Dendritic cell treated with granulocyte-macrophage colony-stimulating factor and Interleukin-4, amounts not matched to agents 40 ng/mL and 50 ng/mL, for 4 days (primary cell): ENCODE measurements at regions of chr2 and their contacts with region 1.

Region 1: GRCh38 chr2:240586198-240586918 is at the start of gene CAPN10:
- H3K4me3 Mint-ChIP-seq: peak within 1 kb of the TSS; percentile 92
- H3K27ac Mint-ChIP-seq: peak within 1 kb of the TSS; percentile 97
- H3K4me1 Mint-ChIP-seq: peaks cover 63% of the 10 kb centered on the region
- H3K27me3 Mint-ChIP-seq: no peaks in the 10 kb centered on the region

Region 2: GRCh38 chr2:240513549-240514287 is 72.6 kb before region 1 on chr2:
- intact Hi-C with region 1: loop called (anchors 5 kb)
- H3K4me3 Mint-ChIP-seq: no peak overlapping the region
- H3K27ac Mint-ChIP-seq: peak overlapping the region; percentile 83
- H3K4me1 Mint-ChIP-seq: peaks cover 20% of the 10 kb centered on the region
- H3K27me3 Mint-ChIP-seq: no peaks in the 10 kb centered on the region

Region 3: GRCh38 chr2:240560480-240561326 is 25.7 kb before region 1 on chr2:
- intact Hi-C with region 1: loop called (anchors 2 kb)
- H3K4me3 Mint-ChIP-seq: peak overlapping the region; percentile 78
- H3K27ac Mint-ChIP-seq: peak overlapping the region; percentile 92
- H3K4me1 Mint-ChIP-seq: peaks cover 78% of the 10 kb centered on the region
- H3K27me3 Mint-ChIP-seq: no peaks in the 10 kb centered on the region

Region 4: GRCh38 chr2:240566203-240567136 is 19.9 kb before region 1 on chr2:
- intact Hi-C with region 1: loop called (anchors 2 kb)
- H3K4me3 Mint-ChIP-seq: peak overlapping the region; percentile 82
- H3K27ac Mint-ChIP-seq: peak overlapping the region; percentile 88
- H3K4me1 Mint-ChIP-seq: peaks cover 86% of the 10 kb centered on the region
- H3K27me3 Mint-ChIP-seq: no peaks in the 10 kb centered on the region

Region 5: DNA sequence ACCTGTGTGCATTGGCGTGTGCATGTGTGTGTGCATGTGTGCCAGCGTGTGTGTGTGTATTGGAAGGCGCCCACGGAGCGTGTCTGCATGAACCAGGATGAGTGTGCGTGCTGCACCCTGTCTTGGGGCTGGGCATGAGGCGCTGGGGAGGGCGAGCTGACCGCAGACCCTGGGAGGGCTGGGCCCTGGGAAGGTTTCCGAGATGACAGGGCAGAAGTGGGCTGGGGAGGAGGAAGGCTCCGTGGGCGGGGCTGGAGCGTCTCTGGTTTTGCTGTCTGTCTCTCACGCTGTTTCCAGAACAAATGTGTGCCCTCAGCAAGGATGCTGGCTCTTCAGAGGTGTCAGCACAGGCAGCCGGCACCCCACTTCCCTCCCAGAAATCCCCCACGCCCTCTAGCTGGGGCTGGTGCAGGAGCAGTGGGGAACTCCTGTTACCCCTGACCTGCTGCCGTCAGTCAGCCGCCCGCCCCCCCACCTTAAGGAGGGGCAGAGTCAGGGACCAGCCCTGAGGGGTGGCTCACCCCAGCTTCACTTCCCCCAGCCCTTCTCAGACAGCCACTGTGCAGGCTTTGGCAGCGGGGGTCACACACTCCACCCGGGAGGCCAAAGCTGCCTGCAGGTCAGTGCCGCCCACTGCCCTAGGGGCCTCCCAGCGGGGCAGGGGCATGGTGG is 38.7 kb after region 1 on chr2 and contains the start of gene GPR35:
- intact Hi-C with region 1: loop called (anchors 2 kb)
- H3K4me3 Mint-ChIP-seq: peak within 1 kb of the TSS; percentile 100
- H3K27ac Mint-ChIP-seq: peak within 1 kb of the TSS; percentile 96
- H3K4me1 Mint-ChIP-seq: peaks cover 92% of the 10 kb centered on the region
- H3K27me3 Mint-ChIP-seq: no peaks in the 10 kb centered on the region